PC-3 (cell line): ENCODE measurements at regions of chr1 and their contacts with region 1.

Region 1: GRCh38 chr1:97334454-97334853 is 586.4 kb downstream of the DPYD start:
- DNase-seq: peak; percentile 33
- ATAC-seq: no peak
- H3K4me3 ChIP-seq: no peak overlapping the region
- H3K27ac ChIP-seq: no peak overlapping the region
- H3K4me1 ChIP-seq: peaks cover 11% of the 10 kb centered on the region
- H3K27me3 ChIP-seq: no peaks in the 10 kb centered on the region
- CTCF ChIP-seq: no peak

Region 2: DNA sequence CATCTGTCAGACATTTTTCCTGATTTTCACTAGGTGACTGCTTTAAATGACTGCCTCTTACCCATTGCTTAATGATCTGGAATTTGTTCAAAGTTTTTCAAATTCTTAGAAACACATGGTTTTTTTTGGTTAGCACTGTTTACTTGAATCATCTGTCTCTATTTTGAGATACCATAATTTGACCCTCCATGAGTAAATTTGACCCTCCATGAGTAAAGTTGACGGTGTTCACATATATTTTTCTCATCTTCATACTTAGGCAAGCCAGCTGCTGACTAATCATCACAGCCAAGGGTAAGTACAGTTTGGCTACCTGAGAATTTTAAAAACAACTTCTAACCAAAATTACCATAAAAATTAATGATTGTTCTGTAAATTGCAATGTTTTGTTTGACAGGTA is 26.3 kb before region 1 on chr1:
- CTCF ChIA-PET with region 1: no interaction called
- POLR2A ChIA-PET with region 1: interaction called, 10 read pairs
- intact Hi-C with region 1: no loop called
- DNase-seq: no peak
- ATAC-seq: no peak
- H3K4me3 ChIP-seq: no peak overlapping the region
- H3K27ac ChIP-seq: no peak overlapping the region
- H3K4me1 ChIP-seq: no peaks in the 10 kb centered on the region
- H3K27me3 ChIP-seq: no peaks in the 10 kb centered on the region
- CTCF ChIP-seq: no peak